ENCODE measurements at regions of chr11 and their contacts with region 1.

Region 1: DNA sequence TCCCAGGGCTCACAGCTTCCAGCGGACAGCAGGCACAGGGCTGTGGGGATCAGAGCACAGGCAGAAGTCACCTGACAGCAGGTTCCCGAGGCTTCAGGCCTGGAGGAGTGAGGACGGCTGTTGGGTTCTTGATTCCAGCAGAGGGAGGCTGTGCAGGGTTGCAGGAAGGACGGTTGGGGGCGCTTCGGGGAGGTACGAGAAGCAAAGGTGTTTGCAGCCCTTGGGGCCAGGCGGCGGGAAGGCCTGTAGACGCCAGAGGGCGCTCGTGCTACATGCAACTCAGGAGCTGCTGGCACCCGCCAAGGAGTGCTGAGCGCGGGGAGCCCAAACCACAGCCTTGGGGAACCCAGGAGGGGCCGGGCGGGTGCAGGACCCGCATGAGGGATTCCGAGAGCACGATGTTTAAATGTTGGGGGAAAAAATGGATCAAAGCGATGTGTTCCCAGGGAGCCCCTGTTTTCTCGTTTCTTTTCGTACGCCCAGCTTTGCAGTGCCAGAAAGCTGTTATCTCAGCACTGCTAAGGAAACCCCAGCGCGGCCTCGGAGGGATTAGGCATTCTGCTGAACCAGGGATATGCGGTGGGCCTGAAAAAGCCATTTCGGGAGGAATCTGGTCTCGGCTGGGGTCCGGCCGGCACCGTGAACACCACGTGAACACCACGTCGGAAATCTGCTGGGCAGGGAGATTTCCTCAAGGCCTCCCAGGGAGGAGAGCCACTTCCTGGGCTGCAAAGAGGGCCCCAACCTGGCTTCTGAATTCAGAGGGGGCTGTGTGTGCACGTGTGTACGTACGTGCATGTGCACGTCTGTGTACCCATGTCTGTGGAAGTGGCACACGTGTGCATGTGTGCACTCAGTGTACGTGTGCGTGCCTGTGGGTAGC is 88.1 kb downstream of the KCNQ1 start:
- DNase-seq: peak; percentile 85
- ATAC-seq: peak; percentile 70
- H3K4me3 ChIP-seq: no peak overlapping the region
- H3K27ac ChIP-seq: peak overlapping the region; percentile 78; the same call in 1 of the 2 replicates
- H3K4me1 ChIP-seq: peaks cover 14% of the 10 kb centered on the region
- H3K27me3 ChIP-seq: peaks cover 8% of the 10 kb centered on the region; the same call in 1 of the 2 replicates
- CTCF ChIP-seq: peak; percentile 99
- POLR2A ChIP-seq: peak; percentile 59; the same call in 1 of the 2 replicates
- RAD21 ChIP-seq: peak; percentile 97

Region 2: DNA sequence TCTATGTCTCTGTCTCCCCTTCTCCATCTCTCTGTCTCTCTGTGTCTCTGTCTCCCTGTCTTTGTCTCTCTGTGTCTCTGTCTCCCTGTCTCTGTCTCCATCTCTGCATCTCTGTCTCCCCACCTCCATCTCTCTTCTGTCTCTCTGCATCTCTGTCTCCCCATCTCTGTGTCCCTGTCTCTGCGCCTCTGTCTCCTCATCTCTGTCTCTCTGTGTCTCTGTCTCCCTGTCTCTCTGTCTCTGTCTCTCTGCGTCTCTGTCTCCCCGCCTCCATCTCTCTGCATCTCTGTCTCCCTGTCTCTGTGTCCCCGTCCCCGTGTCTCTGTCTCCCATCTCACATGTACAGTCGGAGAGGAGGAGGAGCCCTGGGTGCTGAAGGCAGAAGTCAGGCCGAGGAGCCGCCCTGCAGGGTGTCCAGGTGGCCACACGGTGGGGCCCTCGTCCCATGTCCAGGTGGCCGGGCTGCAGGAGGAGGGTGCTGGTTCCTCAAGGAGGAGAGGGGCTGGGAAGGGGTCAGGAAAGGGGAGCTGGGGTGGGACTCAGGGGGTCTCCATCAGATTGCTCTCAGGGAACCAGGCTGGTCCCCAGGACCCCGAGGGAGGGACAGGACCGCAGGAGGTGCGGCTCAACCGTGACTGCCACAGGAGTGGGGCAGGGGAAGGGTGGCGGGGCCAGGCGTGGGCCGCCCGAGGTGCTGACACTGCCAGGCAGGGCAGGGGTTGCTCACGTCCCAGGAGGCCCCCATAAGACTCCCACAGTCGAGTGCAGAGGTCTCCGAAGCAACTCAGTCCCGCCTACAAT is 335.8 kb before region 1 on chr11:
- CTCF ChIA-PET with region 1: interaction called, 3 read pairs
- POLR2A ChIA-PET with region 1: no interaction called
- dilution Hi-C with region 1: no loop called
- in situ Hi-C with region 1: no loop called
- intact Hi-C with region 1: loop called (anchors 1 kb)
- DNase-seq: peak; percentile 38
- ATAC-seq: peak; percentile 93
- H3K4me3 ChIP-seq: no peak overlapping the region
- H3K27ac ChIP-seq: no peak overlapping the region
- H3K4me1 ChIP-seq: no peaks in the 10 kb centered on the region
- H3K27me3 ChIP-seq: peaks cover 17% of the 10 kb centered on the region; the same call in 1 of the 2 replicates
- CTCF ChIP-seq: peak; percentile 81
- POLR2A ChIP-seq: no peak
- RAD21 ChIP-seq: peak; percentile 86

Region 3: GRCh38 chr11:2428322-2428795 is 104.6 kb before region 1 on chr11:
- CTCF ChIA-PET with region 1: interaction called, 4 read pairs
- POLR2A ChIA-PET with region 1: no interaction called
- dilution Hi-C with region 1: no loop called
- in situ Hi-C with region 1: loop called (anchors 5 kb)
- intact Hi-C with region 1: no loop called
- DNase-seq: peak; percentile 34
- ATAC-seq: peak; percentile 88
- H3K4me3 ChIP-seq: no peak overlapping the region
- H3K27ac ChIP-seq: no peak overlapping the region
- H3K4me1 ChIP-seq: no peaks in the 10 kb centered on the region
- H3K27me3 ChIP-seq: peaks cover 11% of the 10 kb centered on the region; the same call in 1 of the 2 replicates
- CTCF ChIP-seq: peak; percentile 83
- POLR2A ChIP-seq: no peak
- RAD21 ChIP-seq: peak; percentile 84

Region 4: GRCh38 chr11:2549080-2549479 is 16.1 kb after region 1 on chr11:
- CTCF ChIA-PET with region 1: no interaction called
- POLR2A ChIA-PET with region 1: no interaction called
- dilution Hi-C with region 1: no loop called
- in situ Hi-C with region 1: no loop called
- intact Hi-C with region 1: no loop called
- DNase-seq: no peak
- ATAC-seq: no peak
- H3K4me3 ChIP-seq: no peak overlapping the region
- H3K27ac ChIP-seq: no peak overlapping the region
- H3K4me1 ChIP-seq: no peaks in the 10 kb centered on the region
- H3K27me3 ChIP-seq: peaks cover 33% of the 10 kb centered on the region
- CTCF ChIP-seq: no peak
- POLR2A ChIP-seq: no peak
- RAD21 ChIP-seq: no peak

Region 5: DNA sequence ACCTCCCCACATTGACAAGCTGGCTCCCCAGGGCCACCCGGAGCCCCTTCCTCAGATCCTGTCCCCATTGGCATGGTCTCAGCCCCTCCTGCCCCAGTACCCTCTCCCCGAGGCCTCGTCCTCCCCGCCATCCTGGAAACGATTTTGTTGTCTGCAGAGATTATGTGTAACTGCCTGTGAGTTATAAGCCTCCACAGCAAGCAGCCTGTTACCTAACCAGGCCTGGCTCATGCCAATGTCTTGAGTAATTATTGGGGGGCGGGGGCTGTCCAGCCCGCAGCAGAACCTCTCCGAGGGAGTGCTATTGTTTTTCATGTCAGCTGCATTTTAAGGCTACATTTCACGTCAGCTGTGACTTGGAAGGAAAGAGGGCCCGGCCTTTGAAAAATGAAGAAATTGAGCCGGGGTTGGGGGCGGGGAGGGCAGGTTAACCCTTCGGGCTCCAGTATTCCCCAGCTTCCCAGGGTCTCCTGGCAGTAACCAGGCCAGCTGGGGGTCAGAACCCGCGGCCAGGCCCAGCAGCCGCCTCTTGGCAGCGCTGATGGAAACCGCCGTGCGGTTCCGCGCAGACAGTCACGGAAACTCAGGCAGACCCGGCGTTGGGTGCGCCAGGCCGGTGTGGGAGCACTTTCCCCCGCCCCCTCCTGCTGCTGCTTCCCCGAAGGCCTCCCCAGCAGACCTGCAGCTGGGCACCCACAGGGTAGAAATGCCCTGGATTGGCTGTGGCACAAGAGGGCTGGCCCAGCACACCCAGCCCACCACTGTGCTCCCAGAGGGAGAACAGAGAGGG is 293.1 kb after region 1 on chr11:
- CTCF ChIA-PET with region 1: no interaction called
- POLR2A ChIA-PET with region 1: no interaction called
- dilution Hi-C with region 1: no loop called
- in situ Hi-C with region 1: no loop called
- intact Hi-C with region 1: loop called (anchors 2 kb)
- DNase-seq: peak; percentile 95
- ATAC-seq: peak; percentile 87
- H3K4me3 ChIP-seq: no peak overlapping the region
- H3K27ac ChIP-seq: peak overlapping the region; percentile 92
- H3K4me1 ChIP-seq: peaks cover 23% of the 10 kb centered on the region
- H3K27me3 ChIP-seq: no peaks in the 10 kb centered on the region
- CTCF ChIP-seq: no peak
- POLR2A ChIP-seq: no peak
- RAD21 ChIP-seq: no peak; the same call in none of the 2 replicates

Region 6: GRCh38 chr11:2892215-2893020 is 359.5 kb after region 1 on chr11:
- CTCF ChIA-PET with region 1: interaction called, 116 read pairs
- POLR2A ChIA-PET with region 1: interaction called, 4 read pairs
- dilution Hi-C with region 1: no loop called
- in situ Hi-C with region 1: loop called (anchors 5 kb)
- intact Hi-C with region 1: loop called (anchors 1 kb)
- DNase-seq: peak; percentile 50
- ATAC-seq: peak; percentile 79
- H3K4me3 ChIP-seq: peak overlapping the region; percentile 44
- H3K27ac ChIP-seq: peak overlapping the region; percentile 89
- H3K4me1 ChIP-seq: peaks cover 26% of the 10 kb centered on the region
- H3K27me3 ChIP-seq: no peaks in the 10 kb centered on the region
- CTCF ChIP-seq: peak; percentile 80
- POLR2A ChIP-seq: 0 out of 2 replicates have a peak, but pooled peaks have one; percentile 35
- RAD21 ChIP-seq: peak; percentile 82